Activated CD4-positive, alpha-beta T cell treated with anti-CD3 and anti-CD28 coated beads for 36 hours (primary cell): ENCODE measurements at regions of chr12 and their contacts with region 1.

Region 1: DNA sequence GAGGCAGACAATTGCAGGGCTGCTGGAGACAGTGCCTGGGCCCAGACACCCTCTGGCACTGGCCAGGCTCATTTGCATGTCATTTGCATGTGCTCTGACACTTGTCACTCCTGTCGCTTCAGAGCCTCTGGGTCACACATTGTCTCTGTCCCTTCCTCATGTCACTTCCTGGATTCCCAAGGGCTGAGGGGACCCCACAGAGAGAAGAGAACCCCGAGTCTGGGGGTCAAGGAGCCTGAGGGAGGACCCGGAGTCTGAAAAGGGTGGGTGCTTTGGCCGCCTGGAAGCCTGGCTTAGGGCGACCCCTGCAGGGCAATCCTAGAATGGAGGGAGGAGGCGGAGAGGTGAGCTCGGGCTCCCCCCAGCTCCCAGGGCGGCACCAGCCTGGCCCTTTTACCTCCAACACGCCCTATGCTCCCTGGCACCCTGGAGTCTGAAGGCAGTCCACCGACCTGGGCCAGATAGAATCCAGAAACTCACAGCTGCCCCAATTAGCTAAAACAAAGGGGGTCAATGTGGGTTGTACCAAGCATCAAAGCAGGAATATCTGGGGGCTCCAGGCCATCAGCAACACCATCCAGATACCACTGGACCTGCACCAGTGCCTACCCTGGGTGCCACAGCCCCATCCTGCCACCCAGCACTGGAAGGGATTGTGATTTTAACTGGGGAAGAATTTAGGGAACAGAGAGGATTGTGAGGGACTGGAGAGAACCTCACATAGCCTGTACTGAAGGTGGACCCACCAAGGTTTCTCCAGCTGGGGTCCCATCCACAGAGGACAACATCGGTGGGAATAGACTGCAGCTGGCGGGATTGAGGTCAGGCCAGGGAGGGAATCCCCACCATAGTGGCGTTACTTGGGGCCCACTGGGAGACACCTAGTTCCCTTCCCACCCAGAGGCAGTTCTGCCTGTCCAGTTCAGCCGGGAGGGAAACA is 21.8 kb upstream of the KRT78 start:
- DNase-seq: peak; percentile 90
- ATAC-seq: peak; percentile 80
- H3K4me3 Mint-ChIP-seq: no peak overlapping the region
- H3K27ac Mint-ChIP-seq: no peak overlapping the region
- H3K4me1 Mint-ChIP-seq: peaks cover 22% of the 10 kb centered on the region
- H3K27me3 Mint-ChIP-seq: peaks cover 4% of the 10 kb centered on the region

Region 2: DNA sequence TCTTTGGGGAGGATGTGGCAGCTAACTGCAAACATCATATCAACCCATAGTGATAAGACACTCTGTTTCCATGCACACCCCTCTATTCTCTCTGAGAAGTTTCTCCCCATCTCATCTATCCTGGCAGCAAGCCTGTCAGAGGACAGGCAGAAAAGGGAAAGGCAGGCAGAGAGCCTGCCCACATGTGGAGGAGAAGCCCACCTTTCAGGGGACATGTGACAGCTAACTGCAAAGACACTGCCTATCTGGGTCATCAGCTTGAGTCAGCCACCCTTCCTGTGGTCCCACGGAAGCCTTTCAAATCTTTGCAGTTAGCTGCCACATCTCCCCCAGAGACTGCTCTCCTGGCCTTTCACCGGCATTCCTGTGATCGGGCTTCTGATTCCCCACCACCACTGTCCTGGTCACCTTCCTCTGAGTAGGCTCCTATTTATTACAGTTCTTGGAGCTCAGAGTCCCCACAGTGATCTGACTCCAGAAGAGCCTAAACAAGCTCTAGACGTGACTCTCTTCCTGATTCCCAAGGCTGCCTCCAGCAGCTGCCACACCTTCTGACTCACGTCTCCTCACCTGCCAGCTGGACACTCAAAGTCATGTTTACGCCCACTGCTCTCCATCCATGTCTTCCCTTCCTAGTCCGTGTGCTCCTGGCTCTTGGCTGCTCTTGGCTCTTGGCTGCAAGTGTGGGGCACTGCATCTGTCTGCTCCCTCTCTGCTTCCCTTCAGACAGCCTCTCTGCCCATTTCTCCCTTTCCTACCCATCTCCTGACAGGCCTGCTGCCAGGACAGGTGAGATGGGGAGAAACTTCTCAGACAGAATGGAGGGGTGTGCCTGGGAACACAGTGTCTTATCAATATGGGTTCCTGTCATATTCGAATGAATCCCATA is 182.9 kb before region 1 on chr12:
- CTCF ChIA-PET with region 1: interaction called, 7 read pairs
- POLR2A ChIA-PET with region 1: no interaction called
- intact Hi-C with region 1: loop called in 1 of 2 experiments (anchors 5 kb)
- DNase-seq: no peak
- ATAC-seq: no peak
- H3K4me3 Mint-ChIP-seq: no peak overlapping the region
- H3K27ac Mint-ChIP-seq: no peak overlapping the region
- H3K4me1 Mint-ChIP-seq: peaks cover 43% of the 10 kb centered on the region
- H3K27me3 Mint-ChIP-seq: no peaks in the 10 kb centered on the region

Region 3: GRCh38 chr12:53105256-53105655 is 234.6 kb after region 1 on chr12:
- CTCF ChIA-PET with region 1: no interaction called
- POLR2A ChIA-PET with region 1: no interaction called
- intact Hi-C with region 1: no loop called
- DNase-seq: no peak
- ATAC-seq: no peak
- H3K4me3 Mint-ChIP-seq: no peak overlapping the region
- H3K27ac Mint-ChIP-seq: no peak overlapping the region
- H3K4me1 Mint-ChIP-seq: peaks cover 21% of the 10 kb centered on the region
- H3K27me3 Mint-ChIP-seq: no peaks in the 10 kb centered on the region